ENCODE measurements at regions of chr14 and their contacts with region 1.

Region 1: DNA sequence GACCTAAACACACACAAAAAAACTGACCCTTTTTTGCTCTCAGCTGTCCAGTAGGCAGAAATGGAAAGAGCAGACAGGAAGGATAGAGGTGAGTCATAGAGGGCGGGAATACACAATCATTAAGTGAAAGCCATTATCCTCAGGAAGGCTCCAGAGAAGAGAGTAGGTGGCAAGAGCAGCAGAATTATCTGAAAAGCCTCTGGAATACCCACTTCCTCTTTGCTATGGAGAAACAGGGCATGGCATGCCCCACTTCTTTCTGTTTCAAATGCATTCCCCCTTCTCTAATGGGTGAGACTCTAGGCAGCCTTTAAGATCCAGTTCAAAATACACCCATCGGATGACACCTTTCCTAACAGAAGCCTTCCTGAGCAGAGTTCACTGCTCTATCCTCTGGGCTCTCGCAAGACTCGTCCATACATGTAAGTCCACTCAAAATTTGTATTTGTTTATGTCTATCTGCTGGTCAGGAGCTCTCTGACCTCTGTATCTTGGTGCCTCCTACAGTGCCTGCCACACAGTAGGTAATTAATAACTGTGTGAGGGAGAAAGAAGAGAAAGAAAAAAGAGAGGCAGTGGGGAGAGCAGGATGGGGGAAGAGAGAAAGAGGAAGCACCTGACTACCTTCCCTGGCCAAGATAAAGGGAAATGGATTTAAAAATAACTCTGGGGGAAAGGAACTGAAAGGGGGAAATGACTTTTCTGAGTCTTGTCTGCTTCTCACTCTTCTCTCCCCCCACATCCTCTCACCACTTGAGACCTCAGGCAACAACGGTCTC is 8.5 kb downstream of the KLHL33 start:
- DNase-seq: no peak
- ATAC-seq: peak; percentile 66
- H3K4me3 Mint-ChIP-seq: peak overlapping the region; percentile 83
- H3K27ac Mint-ChIP-seq: peak overlapping the region; percentile 94
- H3K4me1 Mint-ChIP-seq: peaks cover 36% of the 10 kb centered on the region
- H3K27me3 Mint-ChIP-seq: no peaks in the 10 kb centered on the region

Region 2: GRCh38 chr14:20179218-20179617 is 248.2 kb before region 1 on chr14:
- POLR2A ChIA-PET with region 1: no interaction called
- DNase-seq: no peak
- ATAC-seq: no peak
- H3K4me3 Mint-ChIP-seq: no peak overlapping the region
- H3K27ac Mint-ChIP-seq: no peak overlapping the region
- H3K4me1 Mint-ChIP-seq: no peaks in the 10 kb centered on the region
- H3K27me3 Mint-ChIP-seq: peaks cover 5% of the 10 kb centered on the region

Region 3: DNA sequence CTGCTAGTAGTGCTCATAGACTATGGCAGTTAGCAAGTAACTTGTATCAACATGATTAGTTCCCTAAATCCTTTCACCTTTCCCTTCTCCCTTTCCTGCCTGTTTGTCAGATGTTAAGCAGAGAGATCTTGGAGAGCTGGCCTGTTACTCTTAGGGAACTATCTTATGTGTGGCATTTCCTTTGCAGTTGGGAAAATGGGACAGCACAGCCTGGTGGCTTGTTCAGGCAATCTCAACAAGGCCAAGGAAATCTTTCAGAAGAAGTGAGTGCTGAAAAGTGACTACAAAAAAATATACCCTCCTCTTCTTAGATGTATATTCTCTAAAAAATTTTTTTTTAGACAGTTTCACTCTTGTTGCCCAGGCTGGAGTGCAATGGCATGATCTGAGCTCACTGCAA is 76.6 kb before region 1 on chr14:
- POLR2A ChIA-PET with region 1: no interaction called
- DNase-seq: no peak
- ATAC-seq: no peak
- H3K4me3 Mint-ChIP-seq: no peak overlapping the region
- H3K27ac Mint-ChIP-seq: no peak overlapping the region
- H3K4me1 Mint-ChIP-seq: no peaks in the 10 kb centered on the region
- H3K27me3 Mint-ChIP-seq: no peaks in the 10 kb centered on the region

Region 4: DNA sequence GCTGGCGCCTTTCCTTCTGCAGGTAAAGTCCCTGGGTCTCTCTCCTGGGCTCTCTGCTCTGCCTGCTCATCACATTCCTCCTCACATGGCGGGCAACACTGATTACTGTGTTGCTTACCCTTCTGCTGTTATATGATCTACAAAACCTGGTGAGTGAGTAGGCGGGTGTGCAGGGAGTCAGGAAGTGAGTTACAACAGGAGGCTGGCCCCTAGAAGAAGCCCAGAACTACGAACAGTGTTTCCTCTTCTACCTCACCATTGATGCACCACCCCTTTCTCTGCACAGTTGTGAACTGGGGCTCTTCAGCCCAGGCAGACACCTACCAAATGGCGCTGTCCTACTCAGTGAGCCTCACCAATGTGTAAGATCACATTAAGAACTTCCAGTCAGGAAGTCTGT is 13.5 kb after region 1 on chr14:
- POLR2A ChIA-PET with region 1: interaction called, 18 read pairs
- DNase-seq: peak; percentile 49
- ATAC-seq: peak; percentile 99
- H3K4me3 Mint-ChIP-seq: peak overlapping the region; percentile 82
- H3K27ac Mint-ChIP-seq: peak overlapping the region; percentile 92
- H3K4me1 Mint-ChIP-seq: peaks cover 25% of the 10 kb centered on the region
- H3K27me3 Mint-ChIP-seq: no peaks in the 10 kb centered on the region

Region 5: GRCh38 chr14:20469242-20469889 is 41.9 kb after region 1 on chr14 and contains the start of gene PNP:
- POLR2A ChIA-PET with region 1: interaction called, 25 read pairs
- DNase-seq: peak; percentile 86
- ATAC-seq: peak; percentile 94
- H3K4me3 Mint-ChIP-seq: peak within 1 kb of the TSS; percentile 99
- H3K27ac Mint-ChIP-seq: peak within 1 kb of the TSS; percentile 99
- H3K4me1 Mint-ChIP-seq: peaks cover 42% of the 10 kb centered on the region
- H3K27me3 Mint-ChIP-seq: no peaks in the 10 kb centered on the region
- total RNA-seq, gene PNP: 135 to 141 TPM

Measured in activated naive CD8-positive, alpha-beta T cell treated with anti-CD3 and anti-CD28 coated beads, Interleukin-2, amount 10 ng/mL, durations not matched to agents 7 days and 5 days (primary cell).